OCI-LY7 (cell line): ENCODE measurements at regions of chr6 and their contacts with region 1.

Region 1: GRCh38 chr6:14012313-14013030 is 87.7 kb downstream of the RNF182 start:
- DNase-seq: no peak
- H3K4me3 ChIP-seq: no peak overlapping the region
- H3K27ac ChIP-seq: no peak overlapping the region
- H3K4me1 ChIP-seq: no peaks in the 10 kb centered on the region
- CTCF ChIP-seq: no peak

Region 2: DNA sequence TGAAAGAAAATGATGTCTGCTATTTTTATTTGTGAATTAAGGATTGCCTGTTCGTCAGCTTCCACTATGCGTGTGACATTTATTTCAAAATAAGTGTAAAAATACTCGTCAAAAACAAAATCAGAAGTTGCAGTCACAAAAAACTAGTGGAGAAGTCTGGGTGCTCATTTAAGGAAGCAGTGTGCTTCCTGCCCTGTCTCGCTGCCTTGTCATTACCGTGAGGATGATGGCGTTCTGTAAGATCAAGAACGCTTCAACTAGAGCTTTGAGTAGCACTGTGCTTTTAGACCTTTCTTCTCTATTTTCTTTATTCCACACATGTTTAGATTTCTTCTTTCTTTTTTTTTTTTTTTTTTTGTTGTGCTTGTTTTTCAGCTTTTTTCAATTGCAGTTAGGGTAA is 871.1 kb before region 1 on chr6:
- CTCF ChIA-PET with region 1: no interaction called
- POLR2A ChIA-PET with region 1: no interaction called
- intact Hi-C with region 1: loop called (anchors 5 kb)
- DNase-seq: no peak
- H3K4me3 ChIP-seq: no peak overlapping the region
- H3K27ac ChIP-seq: no peak overlapping the region
- H3K4me1 ChIP-seq: no peaks in the 10 kb centered on the region
- CTCF ChIP-seq: no peak

Region 3: GRCh38 chr6:14066782-14067406 is 54.4 kb after region 1 on chr6:
- CTCF ChIA-PET with region 1: no interaction called
- POLR2A ChIA-PET with region 1: no interaction called
- intact Hi-C with region 1: no loop called
- DNase-seq: peak; percentile 75
- H3K4me3 ChIP-seq: no peak overlapping the region
- H3K27ac ChIP-seq: no peak overlapping the region
- H3K4me1 ChIP-seq: peaks cover 3% of the 10 kb centered on the region
- CTCF ChIP-seq: peak; percentile 93